Left ventricle myocardium inferior (tissue), 1 donor: ENCODE measurements at regions of chr17 and their contacts with region 1.

Region 1: GRCh38 chr17:60577147-60577915 is 22.7 kb upstream of the PPM1D start:
- DNase-seq: no peak
- H3K4me3 ChIP-seq: peak overlapping the region; percentile 58
- H3K27ac ChIP-seq: peak overlapping the region; percentile 77
- H3K4me1 ChIP-seq: peaks cover 39% of the 10 kb centered on the region
- H3K27me3 ChIP-seq: no peaks in the 10 kb centered on the region
- CTCF ChIP-seq: peak; percentile 58

Region 2: GRCh38 chr17:60545465-60546454 is 31.6 kb before region 1 on chr17:
- intact Hi-C with region 1: no loop called
- DNase-seq: no peak
- H3K4me3 ChIP-seq: no peak overlapping the region
- H3K27ac ChIP-seq: no peak overlapping the region
- H3K4me1 ChIP-seq: no peaks in the 10 kb centered on the region
- H3K27me3 ChIP-seq: no peaks in the 10 kb centered on the region
- CTCF ChIP-seq: no peak

Region 3: GRCh38 chr17:60630352-60630751 is 53.0 kb after region 1 on chr17:
- intact Hi-C with region 1: loop called (anchors 10 kb)
- DNase-seq: peak; percentile 43
- H3K4me3 ChIP-seq: no peak overlapping the region
- H3K27ac ChIP-seq: no peak overlapping the region
- H3K4me1 ChIP-seq: no peaks in the 10 kb centered on the region
- H3K27me3 ChIP-seq: no peaks in the 10 kb centered on the region
- CTCF ChIP-seq: no peak

Region 4: DNA sequence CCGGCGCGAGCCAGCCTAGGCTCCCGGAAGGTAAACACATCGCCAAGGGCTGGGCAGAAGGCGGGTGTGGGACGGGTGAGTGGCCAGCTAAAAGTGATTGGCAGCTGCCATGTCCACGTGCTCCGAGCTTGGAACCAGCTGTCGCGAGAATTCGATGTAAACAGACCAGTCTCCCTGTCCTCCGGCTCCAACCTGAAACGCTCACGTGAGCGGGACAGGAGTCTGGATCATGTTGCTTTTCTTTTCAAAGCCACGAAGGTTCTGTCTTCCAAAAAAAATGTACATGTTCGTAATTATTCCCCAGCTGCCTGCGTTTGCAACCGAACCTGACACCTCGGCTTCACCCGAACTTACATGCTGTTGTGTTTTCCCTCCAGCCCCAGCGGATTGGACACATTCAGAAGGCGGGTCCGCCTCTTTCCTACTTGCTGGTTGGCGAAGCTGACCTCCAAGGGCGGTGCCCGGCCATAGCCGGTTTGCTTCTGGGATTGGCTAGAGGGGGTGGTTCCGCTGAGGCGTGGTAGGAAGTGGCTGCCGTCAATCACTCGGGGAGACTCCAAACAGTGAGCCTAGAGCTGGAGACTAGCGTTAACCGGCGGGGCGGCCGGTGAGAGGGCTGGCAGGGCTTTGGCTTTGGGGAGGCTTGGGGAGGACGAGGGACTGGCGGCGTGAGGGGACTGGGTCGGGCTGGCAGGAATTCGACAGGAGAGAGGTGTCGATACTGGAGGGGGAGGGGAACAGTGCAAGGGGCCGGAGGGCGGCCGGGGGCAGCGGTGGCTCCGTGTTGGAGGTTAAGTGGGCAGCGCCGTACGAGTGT is 100.2 kb after region 1 on chr17 and contains the start of gene BCAS3:
- intact Hi-C with region 1: no loop called
- DNase-seq: peak; percentile 97
- H3K4me3 ChIP-seq: peak within 1 kb of the TSS; percentile 85
- H3K27ac ChIP-seq: peak within 1 kb of the TSS; percentile 85
- H3K4me1 ChIP-seq: peaks cover 19% of the 10 kb centered on the region
- H3K27me3 ChIP-seq: no peaks in the 10 kb centered on the region
- CTCF ChIP-seq: no peak
- total RNA-seq, gene BCAS3: 16.5 TPM